ENCODE measurements at regions of chr19 and their contacts with region 1.

Region 1: DNA sequence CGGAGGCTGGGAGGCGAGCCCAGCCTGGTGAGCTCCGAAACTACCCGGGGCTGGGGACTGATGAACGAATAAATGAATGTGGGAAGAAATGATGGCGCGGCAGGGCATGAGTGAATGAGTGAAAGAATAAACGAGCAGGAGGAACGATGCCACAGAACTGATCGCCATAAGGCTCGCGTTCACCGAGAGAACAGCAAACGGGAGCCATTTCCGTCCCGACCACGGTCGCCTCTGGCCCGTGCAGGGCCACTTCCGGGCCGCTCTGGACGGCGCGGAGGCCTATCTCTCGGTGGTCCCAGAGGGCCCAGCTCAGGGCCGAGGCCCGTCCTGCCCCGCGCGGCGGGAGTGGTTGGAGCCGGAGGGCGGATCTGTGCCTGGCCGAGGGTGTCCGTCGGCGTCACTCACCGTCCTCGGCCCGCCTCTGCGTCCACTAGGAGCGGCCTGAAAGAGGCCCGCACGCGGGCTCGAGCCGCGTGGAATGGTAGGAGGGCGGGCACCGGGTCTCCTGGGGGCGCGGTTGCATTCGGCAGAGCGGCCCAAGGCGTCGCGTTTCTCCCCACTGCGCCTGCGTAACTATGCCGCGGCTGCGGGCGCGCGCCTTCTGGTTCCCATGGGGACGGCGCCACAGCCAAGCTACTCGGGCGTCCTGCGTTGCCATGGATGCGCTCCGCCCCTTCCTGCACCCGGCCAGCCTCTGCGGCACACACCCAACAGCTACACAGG is at the start of gene ZNF497:
- DNase-seq: peak; percentile 95 to 96 (median 95)
- H3K4me3 ChIP-seq: peak within 1 kb of the TSS; percentile 90 to 98
- H3K4me3 Mint-ChIP-seq: peak within 1 kb of the TSS; percentile 90 to 98 (median 93)
- H3K27ac ChIP-seq: peak within 1 kb of the TSS; percentile 69
- H3K27ac Mint-ChIP-seq: peak within 1 kb of the TSS; percentile 79 to 98 (median 94)
- H3K4me1 ChIP-seq: peaks cover 11% of the 10 kb centered on the region
- H3K4me1 Mint-ChIP-seq: peaks cover 6 to 13% (median 9%) of the 10 kb centered on the region in 4 donors
- H3K27me3 ChIP-seq: no peaks in the 10 kb centered on the region
- H3K27me3 Mint-ChIP-seq: no peaks in the 10 kb centered on the region
- total RNA-seq, gene ZNF497: 1.7 to 2.0 TPM

Region 2: DNA sequence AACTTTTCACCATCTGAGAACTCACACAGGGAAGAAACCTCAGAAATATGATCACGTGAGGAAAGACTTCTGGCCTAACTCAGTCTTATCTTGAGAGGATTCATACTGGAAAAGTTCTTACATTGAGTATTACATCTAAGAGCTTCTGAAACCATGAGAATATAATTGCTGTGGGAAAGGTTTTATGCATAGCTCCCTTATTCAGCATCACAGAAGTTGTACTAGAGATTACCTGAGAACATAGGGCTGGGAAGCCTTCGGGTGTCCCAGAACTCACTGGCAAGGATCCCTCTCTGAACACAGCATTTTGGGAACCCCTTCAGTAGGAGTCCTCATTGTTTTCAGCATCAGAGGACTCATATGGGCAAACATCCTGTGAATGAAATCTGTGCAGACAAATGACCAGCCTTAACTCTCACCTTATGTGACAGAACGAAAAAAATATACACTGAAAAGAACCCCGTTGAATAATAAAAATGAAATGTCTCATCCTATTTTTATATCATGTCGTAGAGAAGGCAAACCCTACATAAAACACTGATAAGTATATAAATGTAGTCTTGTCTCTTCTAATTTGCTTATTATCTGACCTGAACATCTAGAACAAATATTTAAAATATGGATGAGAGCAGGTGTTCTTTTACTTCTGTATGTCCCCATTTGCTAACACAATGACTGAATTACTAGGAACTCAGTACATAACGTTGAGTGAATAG is 165.4 kb before region 1 on chr19:
- CTCF ChIA-PET with region 1: no interaction called
- POLR2A ChIA-PET with region 1: no interaction called
- intact Hi-C with region 1: no loop called
- DNase-seq: peak in 4 of 5 donors; percentile 9 to 18 (median 13)
- H3K4me3 ChIP-seq: peak overlapping the region in 1 of 2 donors; percentile 0
- H3K4me3 Mint-ChIP-seq: peak overlapping the region in 2 of 8 donors; percentile 20 to 25
- H3K27ac ChIP-seq: no peak overlapping the region
- H3K27ac Mint-ChIP-seq: no peak overlapping the region
- H3K4me1 ChIP-seq: no peaks in the 10 kb centered on the region
- H3K4me1 Mint-ChIP-seq: peaks cover 0 to 3% (median 0%) of the 10 kb centered on the region in 4 donors
- H3K27me3 ChIP-seq: no peaks in the 10 kb centered on the region
- H3K27me3 Mint-ChIP-seq: no peaks in the 10 kb centered on the region

Region 3: GRCh38 chr19:58305065-58305931 is 57.1 kb before region 1 on chr19 and contains the start of gene ERVK3-1:
- CTCF ChIA-PET with region 1: no interaction called
- POLR2A ChIA-PET with region 1: interaction called, 26 read pairs
- intact Hi-C with region 1: loop called (anchors 1 kb)
- DNase-seq: peak; percentile 93 to 97 (median 95)
- H3K4me3 ChIP-seq: peak within 1 kb of the TSS; percentile 54 to 83
- H3K4me3 Mint-ChIP-seq: peak within 1 kb of the TSS; percentile 97 to 100 (median 100)
- H3K27ac ChIP-seq: peak within 1 kb of the TSS; percentile 95
- H3K27ac Mint-ChIP-seq: peak within 1 kb of the TSS; percentile 97 to 100 (median 99)
- H3K4me1 ChIP-seq: peaks cover 31% of the 10 kb centered on the region
- H3K4me1 Mint-ChIP-seq: peaks cover 34 to 59% (median 45%) of the 10 kb centered on the region in 4 donors
- H3K27me3 ChIP-seq: no peaks in the 10 kb centered on the region
- H3K27me3 Mint-ChIP-seq: no peaks in the 10 kb centered on the region
- total RNA-seq, gene ERVK3-1: 72.3 to 76.6 TPM

Region 4: GRCh38 chr19:58346961-58347931 is 15.2 kb before region 1 on chr19:
- CTCF ChIA-PET with region 1: interaction called, 5 read pairs
- POLR2A ChIA-PET with region 1: interaction called, 77 read pairs
- intact Hi-C with region 1: loop called (anchors 1 kb)
- DNase-seq: peak; percentile 67 to 75 (median 70)
- H3K4me3 ChIP-seq: peak overlapping the region; percentile 55 to 61
- H3K4me3 Mint-ChIP-seq: peak overlapping the region; percentile 89 to 94 (median 90)
- H3K27ac ChIP-seq: peak overlapping the region; percentile 70
- H3K27ac Mint-ChIP-seq: peak overlapping the region; percentile 83 to 93 (median 92)
- H3K4me1 ChIP-seq: peaks cover 21% of the 10 kb centered on the region
- H3K4me1 Mint-ChIP-seq: peaks cover 12 to 35% (median 22%) of the 10 kb centered on the region in 4 donors
- H3K27me3 ChIP-seq: no peaks in the 10 kb centered on the region
- H3K27me3 Mint-ChIP-seq: peaks cover 0 to 2% of the 10 kb centered on the region in 2 donors

Region 5: GRCh38 chr19:58400916-58401839 is 38.7 kb after region 1 on chr19:
- CTCF ChIA-PET with region 1: no interaction called
- POLR2A ChIA-PET with region 1: no interaction called
- intact Hi-C with region 1: loop called (anchors 1 kb)
- DNase-seq: peak; percentile 98 to 100 (median 99)
- H3K4me3 ChIP-seq: peak overlapping the region; percentile 57 to 59
- H3K4me3 Mint-ChIP-seq: peak overlapping the region; percentile 87 to 97 (median 91)
- H3K27ac ChIP-seq: peak overlapping the region; percentile 74
- H3K27ac Mint-ChIP-seq: peak overlapping the region; percentile 89 to 99 (median 97)
- H3K4me1 ChIP-seq: peaks cover 20% of the 10 kb centered on the region
- H3K4me1 Mint-ChIP-seq: peaks cover 5 to 20% (median 10%) of the 10 kb centered on the region in 4 donors
- H3K27me3 ChIP-seq: peaks cover 8% of the 10 kb centered on the region
- H3K27me3 Mint-ChIP-seq: peaks cover 6 to 9% of the 10 kb centered on the region in 2 donors

Region 6: GRCh38 chr19:58439576-58440554 is 77.4 kb after region 1 on chr19 and contains the start of gene ZNF132:
- CTCF ChIA-PET with region 1: no interaction called
- POLR2A ChIA-PET with region 1: interaction called, 9 read pairs
- intact Hi-C with region 1: loop called (anchors 1 kb)
- DNase-seq: peak; percentile 93 to 99 (median 98)
- H3K4me3 ChIP-seq: peak within 1 kb of the TSS; percentile 72 to 80
- H3K4me3 Mint-ChIP-seq: peak within 1 kb of the TSS; percentile 87 to 97 (median 96)
- H3K27ac ChIP-seq: peak within 1 kb of the TSS; percentile 69
- H3K27ac Mint-ChIP-seq: peak within 1 kb of the TSS; percentile 82 to 100 (median 99)
- H3K4me1 ChIP-seq: peaks cover 18% of the 10 kb centered on the region
- H3K4me1 Mint-ChIP-seq: peaks cover 12 to 30% (median 22%) of the 10 kb centered on the region in 4 donors
- H3K27me3 ChIP-seq: no peaks in the 10 kb centered on the region
- H3K27me3 Mint-ChIP-seq: peaks cover 2 to 3% of the 10 kb centered on the region in 2 donors
- total RNA-seq, gene ZNF132: 9.5 to 11.7 TPM

Region 7: DNA sequence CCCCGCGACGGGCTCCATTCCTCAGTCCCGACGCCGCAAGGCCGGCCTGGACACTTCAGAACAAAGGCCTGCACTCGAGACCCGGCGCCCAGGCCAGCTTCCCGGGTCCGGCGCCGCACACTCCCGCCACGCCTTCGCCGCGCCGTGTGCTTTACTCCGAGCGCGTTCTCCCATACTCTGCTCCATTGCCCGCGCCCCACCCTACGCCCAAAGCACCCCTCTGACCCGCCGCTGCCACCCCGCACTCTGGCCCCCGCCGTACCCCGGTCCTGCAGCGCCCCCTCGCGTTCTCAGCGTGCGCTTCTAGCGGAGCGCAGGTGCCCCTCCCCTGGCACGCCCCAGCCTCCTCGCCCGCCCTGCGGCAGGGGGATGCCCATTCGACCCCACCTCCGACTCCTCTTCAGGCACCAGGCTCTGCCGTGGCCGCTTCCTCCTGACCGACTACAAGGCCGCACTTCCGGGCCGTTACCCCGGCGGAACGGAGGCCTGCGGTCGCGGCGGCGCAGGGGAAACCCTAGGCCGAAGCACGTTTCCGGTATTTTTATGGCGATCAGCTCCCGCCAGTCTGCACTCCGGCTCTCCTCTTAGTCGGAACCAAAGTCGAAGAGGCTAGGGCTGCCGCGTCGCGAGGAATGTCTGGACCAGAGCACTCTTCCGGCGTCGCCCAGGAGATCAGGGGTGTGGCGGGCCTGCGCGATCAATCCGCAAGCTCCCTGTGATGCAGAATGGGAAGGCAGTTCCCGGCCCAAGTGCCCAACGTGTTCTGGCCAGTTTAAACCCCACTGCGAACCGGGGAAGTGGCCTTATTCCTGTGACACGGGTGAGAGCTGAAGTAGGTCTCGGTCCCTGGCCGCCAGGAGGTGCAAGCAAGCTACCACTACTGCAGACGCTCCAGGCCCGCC is 157.2 kb after region 1 on chr19 and contains the start of gene ZBTB45:
- CTCF ChIA-PET with region 1: interaction called, 11 read pairs
- POLR2A ChIA-PET with region 1: interaction called, 12 read pairs
- intact Hi-C with region 1: no loop called
- DNase-seq: peak; percentile 88 to 92 (median 89)
- H3K4me3 ChIP-seq: peak within 1 kb of the TSS; percentile 81 to 88
- H3K4me3 Mint-ChIP-seq: peak within 1 kb of the TSS; percentile 92 to 97 (median 95)
- H3K27ac ChIP-seq: peak within 1 kb of the TSS; percentile 82
- H3K27ac Mint-ChIP-seq: peak within 1 kb of the TSS; percentile 97 to 99 (median 98)
- H3K4me1 ChIP-seq: peaks cover 28% of the 10 kb centered on the region
- H3K4me1 Mint-ChIP-seq: peaks cover 14 to 53% (median 30%) of the 10 kb centered on the region in 4 donors
- H3K27me3 ChIP-seq: no peaks in the 10 kb centered on the region
- H3K27me3 Mint-ChIP-seq: no peaks in the 10 kb centered on the region
- total RNA-seq, gene ZBTB45: 19.8 TPM

Measured in CD4-positive, alpha-beta memory T cell (primary cell).